Dorsolateral prefrontal cortex (tissue), 120 donors: ENCODE measurements at regions of chr6 and their contacts with region 1.

Region 1: GRCh38 chr6:134161036-134161435 is 108.6 kb upstream of the SLC2A12 start:
- DNase-seq: no peak
- H3K4me3 ChIP-seq: no peak overlapping the region
- H3K27ac ChIP-seq: peak overlapping the region in 1 of 59 donors; percentile 7
- H3K27me3 ChIP-seq: no peaks in the 10 kb centered on the region
- CTCF ChIP-seq: no peak

Region 2: DNA sequence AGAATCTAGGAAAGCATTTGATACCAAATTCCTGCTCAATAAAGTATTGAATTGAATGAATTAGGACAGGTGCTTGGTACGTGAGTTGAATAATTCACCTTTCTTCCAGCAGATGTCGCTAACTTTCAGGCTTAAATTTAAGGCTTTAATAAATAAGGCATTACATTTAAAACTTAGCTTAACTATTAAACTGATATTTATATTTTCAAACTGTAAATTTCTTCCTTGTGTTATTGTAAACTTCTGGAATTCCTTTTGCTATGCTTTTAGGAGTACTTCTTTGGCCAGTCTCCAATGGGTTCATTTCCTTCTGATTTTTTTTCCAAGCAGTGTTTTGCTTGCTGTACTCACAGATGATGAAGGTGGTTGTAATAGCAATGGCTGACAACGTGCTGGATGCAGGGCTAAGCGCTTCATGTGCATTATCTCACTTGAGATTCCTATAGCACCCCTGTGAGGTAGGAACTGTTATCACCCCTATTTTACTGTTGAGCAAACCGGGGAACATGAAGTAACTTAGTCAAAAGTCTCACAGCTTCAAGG is 37.3 kb before region 1 on chr6:
- intact Hi-C with region 1: loop called (anchors 5 kb)
- DNase-seq: no peak
- H3K4me3 ChIP-seq: peak overlapping the region in 1 of 59 donors; percentile 13
- H3K27ac ChIP-seq: no peak overlapping the region
- H3K27me3 ChIP-seq: no peaks in the 10 kb centered on the region
- CTCF ChIP-seq: peak; percentile 62 to 92 (median 80)

Region 3: DNA sequence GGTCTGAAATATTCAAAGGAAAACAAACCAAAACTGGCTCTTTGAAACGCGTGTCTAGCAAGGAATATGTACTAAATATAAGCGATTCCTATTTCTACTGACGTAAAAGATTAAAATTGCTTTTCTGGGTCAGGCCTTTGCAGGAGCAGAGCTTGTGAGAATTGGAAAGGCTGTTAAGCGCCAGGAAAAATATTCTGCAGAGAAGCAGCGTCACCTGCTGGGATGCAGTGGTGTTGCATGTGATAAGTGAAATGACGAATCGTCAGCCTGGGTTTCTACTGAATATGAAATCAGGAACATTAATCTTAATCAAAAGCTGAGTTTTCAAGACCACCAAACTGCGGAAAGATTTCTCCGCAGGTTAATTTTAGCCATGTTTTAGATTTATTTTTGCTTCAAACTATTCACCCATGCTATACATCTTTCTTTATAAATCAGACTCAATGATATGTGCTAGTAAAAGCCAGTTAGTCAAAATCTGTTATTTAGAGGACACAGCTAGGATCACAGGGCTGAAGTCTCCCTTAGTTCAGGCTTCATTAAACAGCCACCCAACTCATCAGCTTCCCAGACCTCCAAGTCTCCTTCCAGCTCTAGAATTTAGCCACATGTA is 721.5 kb after region 1 on chr6:
- intact Hi-C with region 1: loop called (anchors 2 to 5 kb)
- DNase-seq: peak; percentile 65 to 82 (median 74)
- H3K4me3 ChIP-seq: peak overlapping the region in 9 of 59 donors; percentile 0 to 27 (median 15)
- H3K27ac ChIP-seq: peak overlapping the region in 51 of 59 donors; percentile 15 to 88 (median 68)
- H3K27me3 ChIP-seq: no peaks in the 10 kb centered on the region
- CTCF ChIP-seq: peak; percentile 53 to 100 (median 96)

Region 4: DNA sequence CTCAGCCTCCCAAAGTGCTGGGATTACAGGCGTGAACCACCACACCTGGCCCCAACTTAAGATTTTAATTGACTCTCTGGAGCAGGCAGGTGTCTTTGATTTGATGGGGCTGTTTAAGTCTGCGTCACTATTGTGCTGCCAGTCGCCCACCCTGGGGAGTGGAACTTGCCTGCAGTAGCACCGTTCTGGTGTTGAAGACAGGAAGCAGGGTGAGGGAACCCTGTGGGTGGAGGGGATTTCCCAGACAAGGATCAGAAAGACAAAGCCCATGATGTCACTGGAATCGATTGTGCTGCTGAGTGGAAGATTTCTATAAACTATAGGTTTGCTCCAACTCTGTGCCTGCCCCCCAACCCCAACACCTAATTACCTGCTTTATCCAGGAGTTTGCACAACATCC is 777.9 kb after region 1 on chr6:
- intact Hi-C with region 1: loop called in 1 of 2 experiments (anchors 5 kb)
- DNase-seq: no peak
- H3K4me3 ChIP-seq: no peak overlapping the region
- H3K27ac ChIP-seq: no peak overlapping the region
- H3K27me3 ChIP-seq: no peaks in the 10 kb centered on the region
- CTCF ChIP-seq: no peak